Activated T-helper 1 cell treated with anti-CD3 and anti-CD28 coated beads, Interleukin-12 subunit alpha, Interleukin-12 subunit beta, Interleukin-2, Interleukin-4 antibody, amounts not matched to agents 30 ng/mL and 10 ng/mL and 1 ng/mL, durations not matched to agents 14 hours and 24 hours and 36 hours (primary cell): ENCODE measurements at regions of chr6 and their contacts with region 1.

Region 1: GRCh38 chr6:41318654-41319565 is 16.5 kb upstream of the NCR2 start:
- DNase-seq: peak; percentile 78
- H3K4me3 Mint-ChIP-seq: peak overlapping the region; percentile 56
- H3K27ac Mint-ChIP-seq: peak overlapping the region; percentile 79
- H3K4me1 Mint-ChIP-seq: peaks cover 23% of the 10 kb centered on the region
- H3K27me3 Mint-ChIP-seq: peaks cover 27% of the 10 kb centered on the region

Region 2: GRCh38 chr6:41002216-41002615 is 316.7 kb before region 1 on chr6:
- intact Hi-C with region 1: loop called (anchors 1 kb)
- DNase-seq: no peak
- H3K4me3 Mint-ChIP-seq: no peak overlapping the region
- H3K27ac Mint-ChIP-seq: no peak overlapping the region
- H3K4me1 Mint-ChIP-seq: no peaks in the 10 kb centered on the region
- H3K27me3 Mint-ChIP-seq: peaks cover 39% of the 10 kb centered on the region

Region 3: DNA sequence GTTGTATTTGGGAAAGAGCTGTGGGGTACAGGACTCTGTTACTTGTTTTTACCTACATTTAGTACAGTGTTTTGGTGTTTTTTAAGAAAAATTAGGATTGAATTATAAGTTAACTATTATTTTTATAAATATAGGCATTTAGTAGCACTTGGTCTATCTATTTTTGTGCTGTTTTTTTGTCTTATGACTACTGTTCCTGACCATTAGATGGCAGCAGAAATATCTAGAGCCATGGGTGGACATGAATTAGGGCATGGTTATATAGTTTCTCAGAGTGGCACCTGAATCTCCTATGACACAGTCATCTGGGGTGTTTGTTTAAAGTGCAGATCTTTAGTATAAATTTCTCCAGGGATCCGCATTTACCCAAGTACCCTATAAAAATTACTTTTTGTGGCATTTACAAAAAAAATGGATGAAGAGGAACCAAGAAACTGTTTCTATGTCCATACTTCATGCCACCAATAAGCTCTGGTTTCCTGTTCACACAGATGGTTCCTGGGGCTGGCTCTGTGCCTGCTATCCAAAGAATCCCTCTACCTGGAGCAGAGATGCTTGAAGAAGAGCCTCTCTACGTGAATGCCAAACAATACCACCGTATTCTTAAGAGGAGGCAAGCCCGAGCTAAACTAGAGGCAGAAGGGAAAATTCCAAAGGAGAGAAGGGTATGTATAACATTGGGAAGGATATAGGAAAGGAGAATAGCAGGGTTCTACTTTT is 226.3 kb before region 1 on chr6:
- intact Hi-C with region 1: loop called (anchors 1 kb)
- DNase-seq: no peak
- H3K4me3 Mint-ChIP-seq: no peak overlapping the region
- H3K27ac Mint-ChIP-seq: no peak overlapping the region
- H3K4me1 Mint-ChIP-seq: peaks cover 10% of the 10 kb centered on the region
- H3K27me3 Mint-ChIP-seq: no peaks in the 10 kb centered on the region

Region 4: DNA sequence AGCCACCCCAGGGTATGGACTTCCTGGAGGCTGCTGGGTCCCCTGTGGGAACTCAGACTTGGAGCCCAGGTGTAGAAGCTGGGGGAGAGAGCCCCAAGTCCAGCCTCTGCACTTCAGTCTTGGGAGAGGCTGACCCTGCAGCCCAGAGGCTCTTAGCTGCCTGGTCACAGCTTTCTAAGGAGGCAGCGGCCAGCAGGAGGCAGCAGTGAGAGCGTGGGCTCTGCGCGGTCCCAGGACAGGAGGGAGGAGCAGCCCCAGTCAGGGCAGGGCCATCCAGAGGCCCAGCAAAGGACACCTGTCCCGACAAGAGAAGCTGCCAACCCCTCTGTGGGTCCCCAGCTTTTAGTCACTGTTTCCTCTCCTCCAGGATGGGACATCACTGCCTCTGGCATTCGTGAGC is 127.3 kb before region 1 on chr6:
- intact Hi-C with region 1: loop called (anchors 2 kb)
- DNase-seq: no peak
- H3K4me3 Mint-ChIP-seq: no peak overlapping the region
- H3K27ac Mint-ChIP-seq: no peak overlapping the region
- H3K4me1 Mint-ChIP-seq: peaks cover 40% of the 10 kb centered on the region
- H3K27me3 Mint-ChIP-seq: no peaks in the 10 kb centered on the region

Region 5: DNA sequence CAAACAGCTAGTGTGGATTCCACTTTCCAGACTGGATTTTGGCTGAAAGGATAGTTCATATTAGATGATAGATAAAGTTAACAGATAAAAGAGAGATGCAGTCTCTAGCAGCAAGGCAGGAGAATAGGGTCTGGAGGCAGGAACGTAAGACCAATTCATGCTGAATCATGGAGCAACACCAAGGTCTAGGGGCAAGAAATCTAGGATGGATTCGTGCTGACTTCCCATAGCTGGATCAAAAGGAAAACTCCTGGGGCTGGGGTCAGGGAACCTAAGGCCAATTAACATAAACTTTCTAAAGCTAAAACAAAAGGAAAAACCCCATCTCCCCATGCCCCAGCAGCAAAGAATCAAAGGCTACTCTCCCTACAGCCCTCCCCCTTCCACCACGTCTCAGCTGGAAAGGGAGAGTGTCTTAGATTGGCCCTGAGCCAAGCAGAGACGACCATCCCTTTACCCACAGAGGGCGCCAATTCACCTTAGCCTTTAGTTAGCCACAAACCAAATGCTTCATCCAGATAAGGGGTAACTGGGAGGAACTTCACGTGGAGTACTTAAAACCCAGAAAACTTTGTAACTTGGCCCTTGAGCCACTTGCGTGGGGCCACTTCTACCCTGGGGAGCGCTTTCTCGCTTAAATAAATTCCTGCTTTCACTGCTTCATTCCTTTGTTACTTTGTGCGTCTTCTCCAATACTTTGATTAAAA is 40.1 kb before region 1 on chr6:
- intact Hi-C with region 1: loop called (anchors 1 kb)
- DNase-seq: peak; percentile 45
- H3K4me3 Mint-ChIP-seq: no peak overlapping the region
- H3K27ac Mint-ChIP-seq: no peak overlapping the region
- H3K4me1 Mint-ChIP-seq: peaks cover 13% of the 10 kb centered on the region
- H3K27me3 Mint-ChIP-seq: peaks cover 19% of the 10 kb centered on the region

Region 6: GRCh38 chr6:41306187-41306854 is 12.6 kb before region 1 on chr6:
- intact Hi-C with region 1: loop called (anchors 1 kb)
- DNase-seq: peak; percentile 25
- H3K4me3 Mint-ChIP-seq: no peak overlapping the region
- H3K27ac Mint-ChIP-seq: no peak overlapping the region
- H3K4me1 Mint-ChIP-seq: peaks cover 15% of the 10 kb centered on the region
- H3K27me3 Mint-ChIP-seq: peaks cover 17% of the 10 kb centered on the region